Heart left ventricle (tissue), 16 donors: ENCODE measurements at regions of chr9 and their contacts with region 1.

Region 1: DNA sequence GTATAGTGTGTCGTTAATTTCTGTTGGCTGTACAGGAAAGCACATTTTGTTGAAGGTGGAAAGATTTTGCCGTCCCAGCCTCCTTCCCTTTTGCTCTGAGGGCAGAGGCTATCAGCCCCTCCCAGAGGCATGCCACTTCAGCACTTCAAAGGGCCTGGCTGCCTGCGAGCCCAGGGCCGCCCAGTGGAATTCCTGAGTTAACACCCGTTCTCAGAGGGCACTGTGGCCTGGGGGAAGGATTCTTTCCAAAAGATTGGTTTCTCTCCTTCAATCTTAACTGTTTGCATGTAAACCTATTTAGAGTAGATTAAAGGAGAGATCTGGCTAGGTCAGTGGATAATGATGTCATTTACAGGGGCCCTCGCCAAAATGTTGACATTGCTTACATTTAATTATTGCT is 238.6 kb downstream of the FANCC start:
- DNase-seq: no peak
- ATAC-seq: peak; percentile 44 to 56 (median 54)
- H3K4me3 ChIP-seq: no peak overlapping the region
- H3K27ac ChIP-seq: peak overlapping the region in 11 of 12 donors; percentile 51 to 81 (median 70)
- H3K4me1 ChIP-seq: peaks cover 31 to 100% (median 76%) of the 10 kb centered on the region in 12 donors
- H3K27me3 ChIP-seq: no peaks in the 10 kb centered on the region
- CTCF ChIP-seq: peak in 1 of 12 donors; percentile 11
- POLR2A ChIP-seq: no peak

Region 2: GRCh38 chr9:94443032-94443722 is 635.8 kb before region 1 on chr9:
- intact Hi-C with region 1: no loop called
- DNase-seq: no peak
- ATAC-seq: no peak
- H3K4me3 ChIP-seq: no peak overlapping the region
- H3K27ac ChIP-seq: no peak overlapping the region
- H3K4me1 ChIP-seq: peaks cover 0 to 8% (median 1%) of the 10 kb centered on the region in 12 donors
- H3K27me3 ChIP-seq: no peaks in the 10 kb centered on the region
- CTCF ChIP-seq: no peak
- POLR2A ChIP-seq: no peak

Region 3: GRCh38 chr9:94900222-94901018 is 178.5 kb before region 1 on chr9:
- intact Hi-C with region 1: no loop called
- DNase-seq: no peak
- ATAC-seq: peak in 3 of 4 donors; percentile 65 to 87 (median 73)
- H3K4me3 ChIP-seq: peak overlapping the region in 4 of 12 donors; percentile 6 to 20 (median 18)
- H3K27ac ChIP-seq: peak overlapping the region in 11 of 12 donors; percentile 4 to 78 (median 64)
- H3K4me1 ChIP-seq: peaks cover 0 to 29% (median 6%) of the 10 kb centered on the region in 12 donors
- H3K27me3 ChIP-seq: no peaks in the 10 kb centered on the region
- CTCF ChIP-seq: no peak
- POLR2A ChIP-seq: no peak

Region 4: DNA sequence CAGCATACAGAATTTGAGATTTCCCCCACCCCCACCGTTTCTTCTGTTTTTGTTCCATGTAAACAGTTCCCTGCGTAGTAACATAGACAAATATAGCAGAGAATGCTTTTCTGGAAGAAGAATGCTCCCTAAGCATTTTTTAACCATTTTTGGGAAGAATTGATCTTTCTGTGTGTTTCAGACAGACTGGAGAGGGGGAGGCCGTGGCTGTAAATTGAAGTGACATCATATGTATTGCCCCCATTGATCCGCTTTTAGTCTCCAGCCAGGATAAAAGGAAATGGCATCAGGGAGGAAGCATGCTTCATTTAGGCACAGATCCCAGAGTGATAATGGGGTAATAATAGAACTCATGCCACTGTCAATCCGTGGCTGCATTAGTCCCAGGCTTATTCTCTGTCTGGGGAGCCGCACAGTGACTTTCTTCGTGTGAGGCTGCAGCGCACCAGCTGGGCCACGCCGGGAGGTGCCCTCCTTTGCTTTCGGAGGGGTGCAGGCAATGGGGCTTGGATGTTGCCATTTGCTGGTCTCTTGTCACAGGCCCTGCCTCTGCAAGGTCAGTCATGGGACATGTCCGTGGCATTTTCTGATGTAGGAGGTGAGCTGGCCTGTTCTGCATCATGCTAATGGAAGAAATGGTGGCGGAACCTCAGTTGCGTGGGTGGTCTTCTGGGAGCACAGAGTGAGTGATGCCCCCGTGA is 23.0 kb before region 1 on chr9:
- intact Hi-C with region 1: loop called in 1 of 10 experiments (anchors 2 kb)
- DNase-seq: no peak
- ATAC-seq: peak; percentile 71 to 82 (median 75)
- H3K4me3 ChIP-seq: peak overlapping the region in 9 of 12 donors; percentile 23 to 50 (median 32)
- H3K27ac ChIP-seq: peak overlapping the region; percentile 45 to 86 (median 75)
- H3K4me1 ChIP-seq: peaks cover 7 to 98% (median 79%) of the 10 kb centered on the region in 12 donors
- H3K27me3 ChIP-seq: no peaks in the 10 kb centered on the region
- CTCF ChIP-seq: peak in 1 of 12 donors; percentile 11
- POLR2A ChIP-seq: peak in 1 of 2 donors; percentile 41